ENCODE measurements at regions of chr4 and their contacts with region 1.

Region 1: GRCh38 chr4:99462875-99463464 is 27.8 kb upstream of the ADH7 start:
- DNase-seq: peak; percentile 57
- ATAC-seq: peak; percentile 99
- H3K4me3 ChIP-seq: no peak overlapping the region
- H3K27ac ChIP-seq: no peak overlapping the region
- H3K4me1 ChIP-seq: peaks cover 0 to 5% of the 10 kb centered on the region in 2 experiments; a peak in 1 of 4 replicates
- H3K27me3 ChIP-seq: no peaks in the 10 kb centered on the region
- CTCF ChIP-seq: peak; percentile 79 to 92 (median 79)
- POLR2A ChIP-seq: no peak
- RAD21 ChIP-seq: peak; percentile 94

Region 2: GRCh38 chr4:98150092-98150761 is 1312.7 kb before region 1 on chr4:
- CTCF ChIA-PET with region 1: no interaction called
- POLR2A ChIA-PET with region 1: no interaction called
- RAD21 ChIA-PET with region 1: no interaction called
- intact Hi-C with region 1: loop called (anchors 5 kb)
- DNase-seq: no peak
- ATAC-seq: no peak
- H3K4me3 ChIP-seq: no peak overlapping the region
- H3K27ac ChIP-seq: no peak overlapping the region
- H3K4me1 ChIP-seq: no peaks in the 10 kb centered on the region
- H3K27me3 ChIP-seq: no peaks in the 10 kb centered on the region
- CTCF ChIP-seq: peak in 2 of 3 experiments; percentile 36 to 46; a peak in 2 of 6 replicates
- POLR2A ChIP-seq: no peak
- RAD21 ChIP-seq: peak; percentile 64

Region 3: DNA sequence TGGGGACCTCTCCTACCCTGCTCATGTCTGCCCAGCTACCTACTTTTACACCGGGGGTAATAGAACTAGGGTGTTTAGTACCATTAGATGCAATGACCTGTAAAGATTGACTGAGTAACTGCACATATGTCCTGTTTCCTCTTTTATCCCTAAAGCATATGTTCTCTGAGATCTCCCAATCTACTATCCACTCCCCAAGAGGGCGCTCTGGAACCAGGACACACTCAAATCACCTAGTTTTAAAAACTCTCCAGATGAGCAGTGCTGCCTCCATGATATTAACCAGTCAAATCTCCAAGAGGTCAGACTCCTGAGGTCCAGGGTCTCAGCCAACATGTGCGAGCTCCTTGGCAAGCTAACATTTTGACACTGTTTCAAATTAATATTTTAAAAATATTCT is 717.6 kb before region 1 on chr4:
- CTCF ChIA-PET with region 1: interaction called, 4 read pairs
- POLR2A ChIA-PET with region 1: no interaction called
- RAD21 ChIA-PET with region 1: no interaction called
- intact Hi-C with region 1: loop called (anchors 10 kb)
- DNase-seq: no peak
- ATAC-seq: peak; percentile 66; the same call in 1 of the 2 replicates
- H3K4me3 ChIP-seq: no peak overlapping the region
- H3K27ac ChIP-seq: no peak overlapping the region
- H3K4me1 ChIP-seq: peaks cover 13 to 24% of the 10 kb centered on the region in 2 experiments
- H3K27me3 ChIP-seq: no peaks in the 10 kb centered on the region
- CTCF ChIP-seq: peak; percentile 45 to 54 (median 50); a peak in 5 of 6 replicates
- POLR2A ChIP-seq: no peak
- RAD21 ChIP-seq: peak; percentile 65

Region 4: DNA sequence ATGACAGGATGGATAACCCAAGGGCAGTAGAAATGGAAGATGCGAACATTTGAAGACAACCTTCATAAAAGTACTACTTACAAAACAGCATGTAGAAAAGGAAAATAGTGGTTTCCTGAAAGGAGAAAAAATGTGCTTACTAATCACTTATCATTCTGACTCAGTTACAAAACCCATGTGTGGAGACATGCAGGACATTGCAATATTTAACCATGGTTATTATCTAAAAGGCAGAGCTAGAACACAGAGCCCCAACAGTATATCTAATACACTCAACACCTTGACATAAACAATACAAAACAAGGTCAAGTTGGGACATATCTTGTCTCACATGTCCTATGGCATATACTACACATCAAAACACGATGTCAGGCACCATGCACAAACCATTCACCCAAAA is 589.9 kb before region 1 on chr4:
- CTCF ChIA-PET with region 1: no interaction called
- POLR2A ChIA-PET with region 1: no interaction called
- RAD21 ChIA-PET with region 1: no interaction called
- intact Hi-C with region 1: no loop called
- DNase-seq: no peak
- ATAC-seq: no peak
- H3K4me3 ChIP-seq: no peak overlapping the region
- H3K27ac ChIP-seq: no peak overlapping the region
- H3K4me1 ChIP-seq: no peaks in the 10 kb centered on the region
- H3K27me3 ChIP-seq: no peaks in the 10 kb centered on the region
- CTCF ChIP-seq: no peak
- POLR2A ChIP-seq: no peak
- RAD21 ChIP-seq: no peak

Region 5: GRCh38 chr4:99117876-99118693 is 344.9 kb before region 1 on chr4:
- CTCF ChIA-PET with region 1: interaction called, 6 read pairs
- POLR2A ChIA-PET with region 1: no interaction called
- RAD21 ChIA-PET with region 1: no interaction called
- intact Hi-C with region 1: loop called (anchors 1 kb)
- DNase-seq: no peak
- ATAC-seq: no peak
- H3K4me3 ChIP-seq: no peak overlapping the region
- H3K27ac ChIP-seq: no peak overlapping the region
- H3K4me1 ChIP-seq: no peaks in the 10 kb centered on the region
- H3K27me3 ChIP-seq: no peaks in the 10 kb centered on the region
- CTCF ChIP-seq: peak; percentile 13 to 55 (median 40); a peak in 4 of 6 replicates
- POLR2A ChIP-seq: no peak
- RAD21 ChIP-seq: peak; percentile 52

Region 6: DNA sequence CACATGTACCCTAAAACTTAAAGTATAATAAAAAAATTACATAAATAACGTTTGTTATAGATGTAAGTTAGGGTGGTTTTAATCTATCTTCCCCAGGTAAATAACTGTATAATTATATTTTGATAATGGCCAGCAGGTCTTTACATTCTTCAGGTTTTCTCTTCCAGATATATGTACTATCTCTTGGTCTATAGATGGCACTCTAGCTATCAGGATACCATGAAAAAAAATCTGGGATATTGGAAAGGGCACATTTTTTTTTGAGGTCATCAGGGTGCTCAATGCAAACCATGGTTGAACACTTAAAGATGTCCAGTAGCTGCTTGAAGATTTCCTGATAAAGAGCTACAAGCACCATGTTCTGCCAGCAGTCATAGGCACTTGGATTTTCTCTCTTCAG is 303.3 kb before region 1 on chr4:
- CTCF ChIA-PET with region 1: no interaction called
- POLR2A ChIA-PET with region 1: no interaction called
- RAD21 ChIA-PET with region 1: no interaction called
- intact Hi-C with region 1: no loop called
- DNase-seq: no peak
- ATAC-seq: peak; percentile 59
- H3K4me3 ChIP-seq: no peak overlapping the region
- H3K27ac ChIP-seq: no peak overlapping the region
- H3K4me1 ChIP-seq: no peaks in the 10 kb centered on the region
- H3K27me3 ChIP-seq: no peaks in the 10 kb centered on the region
- CTCF ChIP-seq: peak; percentile 15 to 20 (median 17); a peak in 2 of 6 replicates
- POLR2A ChIP-seq: no peak
- RAD21 ChIP-seq: peak; percentile 48

Region 7: GRCh38 chr4:99655308-99656081 is 192.5 kb after region 1 on chr4:
- CTCF ChIA-PET with region 1: no interaction called
- POLR2A ChIA-PET with region 1: no interaction called
- RAD21 ChIA-PET with region 1: no interaction called
- intact Hi-C with region 1: no loop called
- DNase-seq: no peak
- ATAC-seq: no peak
- H3K4me3 ChIP-seq: no peak overlapping the region
- H3K27ac ChIP-seq: no peak overlapping the region
- H3K4me1 ChIP-seq: peaks cover 0 to 5% of the 10 kb centered on the region in 2 experiments; a peak in 2 of 4 replicates
- H3K27me3 ChIP-seq: no peaks in the 10 kb centered on the region
- CTCF ChIP-seq: no peak
- POLR2A ChIP-seq: no peak
- RAD21 ChIP-seq: no peak

Measured in HCT116 (cell line).